Left colon (tissue), 2 donors: ENCODE measurements at regions of chr17 and their contacts with region 1.

Region 1: GRCh38 chr17:6589266-6589946 is 33.1 kb upstream of the PITPNM3 start:
- DNase-seq: no peak
- ATAC-seq: no peak

Region 2: GRCh38 chr17:6461792-6462524 is 127.4 kb before region 1 on chr17:
- intact Hi-C with region 1: loop called in 1 of 2 experiments (anchors 10 kb)
- DNase-seq: no peak
- ATAC-seq: no peak

Region 3: GRCh38 chr17:6651357-6651918 is 62.0 kb after region 1 on chr17 and contains the starts of genes C17orf100 and MED31:
- intact Hi-C with region 1: no loop called
- DNase-seq: peak; percentile 94 to 97
- ATAC-seq: peak; percentile 92
- total RNA-seq, gene C17orf100: 2.0 to 3.2 TPM
- total RNA-seq, gene MED31: 9.2 to 11.3 TPM

Region 4: DNA sequence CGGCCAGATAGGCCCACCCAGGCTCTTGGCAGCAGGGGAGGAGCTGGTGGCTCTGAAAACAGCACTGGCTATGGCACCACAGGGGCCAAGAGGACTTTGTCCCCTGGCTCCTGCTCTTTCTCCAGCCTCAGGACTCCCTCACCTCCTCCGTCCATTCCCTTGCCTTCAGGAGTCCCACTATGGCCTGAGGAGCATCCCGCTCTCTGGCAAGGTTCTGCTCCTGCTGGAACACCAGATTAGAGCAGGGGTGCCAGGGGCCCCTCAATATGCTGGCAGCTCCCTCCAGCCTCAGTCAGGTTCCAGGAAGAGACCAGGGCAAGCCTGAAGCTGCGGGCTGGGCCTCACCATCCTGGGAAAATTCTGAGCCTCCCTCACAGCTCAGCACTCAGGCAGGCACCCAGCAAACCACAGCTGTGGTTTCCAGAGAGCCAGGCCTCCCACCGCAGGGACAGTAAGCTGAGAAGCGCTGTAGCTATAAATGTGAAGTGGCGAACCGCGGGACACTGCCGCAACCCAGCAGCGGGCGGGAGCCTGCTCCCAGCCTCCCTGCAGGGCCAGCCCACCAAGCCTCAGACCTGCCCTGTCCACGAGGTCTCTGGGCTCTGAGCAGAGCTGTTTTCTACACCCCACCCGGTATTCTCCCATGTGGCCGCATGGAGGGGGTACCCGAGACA is 87.9 kb after region 1 on chr17:
- intact Hi-C with region 1: no loop called
- DNase-seq: no peak
- ATAC-seq: no peak

Region 5: DNA sequence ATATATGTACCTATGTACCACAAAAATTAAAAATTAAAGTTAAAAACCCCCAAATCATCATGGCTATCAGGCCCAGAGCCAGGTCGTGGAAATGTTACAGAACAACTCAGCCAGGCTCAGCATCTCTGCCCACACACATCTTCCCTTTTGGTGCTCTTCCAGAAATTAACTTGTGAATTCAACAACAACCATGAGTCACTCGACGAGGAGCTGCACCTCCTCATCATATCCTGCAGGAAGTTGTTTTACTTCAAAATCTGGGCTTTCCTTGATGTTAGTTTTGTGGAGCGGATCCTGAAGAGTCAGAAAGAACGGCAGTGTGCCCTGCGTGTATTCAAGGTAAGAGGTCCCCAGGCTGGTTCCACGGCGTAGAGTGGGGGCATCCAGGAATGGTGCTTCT is 197.2 kb after region 1 on chr17:
- intact Hi-C with region 1: no loop called
- DNase-seq: no peak
- ATAC-seq: no peak